ENCODE measurements at regions of chr7 and their contacts with region 1.

Region 1: GRCh38 chr7:95199779-95200558 is 124.4 kb downstream of the PON1 start:
- DNase-seq: peak; percentile 71
- H3K4me3 ChIP-seq: no peak overlapping the region
- H3K27ac ChIP-seq: no peak overlapping the region
- H3K4me1 ChIP-seq: no peaks in the 10 kb centered on the region
- H3K27me3 ChIP-seq: no peaks in the 10 kb centered on the region
- CTCF ChIP-seq: peak; percentile 80

Region 2: DNA sequence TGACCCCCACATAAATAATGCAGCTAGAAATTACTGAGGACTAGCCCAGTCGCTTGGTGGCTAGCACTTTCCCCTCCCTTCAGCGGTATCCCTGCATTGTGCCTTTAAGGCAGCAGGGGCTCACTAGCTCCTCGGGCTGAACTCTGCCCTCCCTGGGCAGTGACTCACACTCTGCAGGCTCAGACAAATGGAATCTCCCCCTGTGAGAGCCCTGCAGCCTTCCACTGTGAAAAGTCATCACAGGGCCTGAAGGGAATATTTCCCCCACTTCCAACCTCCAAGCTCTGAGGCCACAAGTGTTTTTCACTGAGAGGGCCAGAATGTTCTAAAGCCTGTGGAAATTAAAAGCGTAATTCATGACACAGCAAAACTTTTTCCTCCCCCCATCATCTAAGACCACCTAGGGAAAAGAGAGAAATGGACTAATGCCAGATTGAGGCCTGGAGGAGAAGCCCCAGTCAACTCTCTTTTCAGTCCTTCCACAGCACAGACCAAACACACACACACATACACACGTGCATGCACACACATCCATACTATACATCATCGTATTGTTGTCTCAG is 898.9 kb before region 1 on chr7:
- CTCF ChIA-PET with region 1: no interaction called
- POLR2A ChIA-PET with region 1: no interaction called
- intact Hi-C with region 1: no loop called
- DNase-seq: peak; percentile 67
- H3K4me3 ChIP-seq: no peak overlapping the region
- H3K27ac ChIP-seq: no peak overlapping the region
- H3K4me1 ChIP-seq: peaks cover 32% of the 10 kb centered on the region
- H3K27me3 ChIP-seq: no peaks in the 10 kb centered on the region
- CTCF ChIP-seq: no peak

Region 3: DNA sequence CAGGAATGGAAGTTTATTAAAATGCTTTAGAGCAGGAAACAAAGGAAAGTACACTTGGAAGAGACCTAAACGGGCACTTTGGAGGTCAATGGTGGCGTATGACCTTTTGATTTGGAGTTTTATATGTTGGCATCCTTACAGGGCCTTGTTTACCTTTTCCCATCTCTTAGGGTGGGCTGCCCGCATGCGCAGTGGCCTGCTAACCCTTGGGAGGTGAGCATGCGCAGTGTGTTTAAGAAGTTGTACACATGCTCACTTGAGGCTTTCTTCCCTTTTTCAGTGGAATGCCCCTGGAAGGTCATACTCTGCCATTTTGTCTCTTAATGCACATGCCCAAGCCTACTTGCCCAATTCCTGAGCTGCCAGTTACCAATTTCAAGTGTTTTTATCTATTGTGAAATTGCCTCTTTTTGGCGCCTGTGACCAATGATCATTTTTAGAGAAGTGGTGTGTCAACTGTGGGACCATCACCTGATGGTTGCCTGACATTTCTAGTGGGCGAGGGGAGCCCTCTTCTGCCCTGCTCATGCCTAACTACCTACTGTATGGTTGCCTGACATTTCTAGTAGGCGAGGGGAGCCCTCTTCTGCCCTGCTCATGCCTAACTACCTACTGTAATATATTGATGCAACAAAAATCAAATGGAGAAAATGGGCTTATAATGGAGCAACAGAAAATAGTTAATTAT is 154.6 kb before region 1 on chr7:
- CTCF ChIA-PET with region 1: no interaction called
- POLR2A ChIA-PET with region 1: no interaction called
- intact Hi-C with region 1: loop called (anchors 5 kb)
- DNase-seq: peak; percentile 72
- H3K4me3 ChIP-seq: no peak overlapping the region
- H3K27ac ChIP-seq: no peak overlapping the region
- H3K4me1 ChIP-seq: peaks cover 18% of the 10 kb centered on the region
- H3K27me3 ChIP-seq: no peaks in the 10 kb centered on the region
- CTCF ChIP-seq: peak; percentile 65

Region 4: DNA sequence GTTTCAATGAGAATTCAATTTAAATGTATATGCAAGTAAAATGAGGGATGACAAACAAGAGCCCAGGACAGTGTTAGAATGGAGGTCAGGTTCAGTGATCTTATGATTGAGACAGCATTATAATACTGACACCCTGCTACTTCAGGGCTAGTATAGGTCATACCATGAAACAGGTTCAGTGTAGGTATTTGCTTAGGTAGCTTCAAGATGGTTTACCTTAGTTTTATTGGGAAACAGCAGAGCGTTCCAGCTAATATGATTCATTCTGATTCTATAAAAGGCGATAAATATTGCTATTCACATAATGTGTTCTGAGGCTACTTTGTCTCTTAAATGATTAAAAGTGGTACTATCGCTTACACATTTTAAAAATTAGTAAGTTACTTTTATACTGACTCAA is 89.3 kb before region 1 on chr7:
- CTCF ChIA-PET with region 1: no interaction called
- POLR2A ChIA-PET with region 1: no interaction called
- intact Hi-C with region 1: no loop called
- DNase-seq: no peak
- H3K4me3 ChIP-seq: no peak overlapping the region
- H3K27ac ChIP-seq: no peak overlapping the region
- H3K4me1 ChIP-seq: peaks cover 7% of the 10 kb centered on the region
- H3K27me3 ChIP-seq: no peaks in the 10 kb centered on the region
- CTCF ChIP-seq: no peak